SK-N-SH (cell line): ENCODE measurements at regions of chr3 and their contacts with region 1.

Region 1: DNA sequence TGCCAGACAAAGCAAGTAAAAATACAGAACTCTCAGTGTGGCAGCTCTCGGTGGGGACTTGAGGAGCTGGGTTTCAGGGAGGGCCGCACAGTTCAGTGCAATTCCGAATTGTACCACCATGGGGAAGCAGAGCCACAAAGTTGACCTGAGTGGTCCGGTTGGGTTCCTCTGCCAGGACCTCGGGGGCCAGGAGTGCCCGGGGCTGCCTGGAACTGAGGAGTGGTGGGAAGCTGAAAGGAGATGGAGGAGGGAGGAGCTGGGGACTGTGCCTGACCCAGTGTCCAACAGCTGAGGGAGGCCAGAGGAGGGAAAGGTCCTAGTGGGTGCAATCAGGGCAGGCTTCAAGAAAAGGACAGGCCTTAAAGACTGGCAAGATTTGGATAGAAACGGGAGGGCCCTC is 32.2 kb upstream of the TRH start:
- DNase-seq: peak; percentile 86
- H3K4me3 ChIP-seq: peak overlapping the region in 1 of 2 experiments; percentile 30; a peak in 1 of 4 replicates
- H3K27ac ChIP-seq: no peak overlapping the region
- H3K4me1 ChIP-seq: no peaks in the 10 kb centered on the region
- H3K27me3 ChIP-seq: no peaks in the 10 kb centered on the region; the same call in 1 of the 2 replicates
- CTCF ChIP-seq: peak; percentile 73
- EP300 ChIP-seq: no peak
- RAD21 ChIP-seq: peak; percentile 92

Region 2: GRCh38 chr3:129490242-129491045 is 451.9 kb before region 1 on chr3:
- CTCF ChIA-PET with region 1: interaction called, 11 read pairs
- POLR2A ChIA-PET with region 1: no interaction called
- DNase-seq: peak; percentile 84
- H3K4me3 ChIP-seq: no peak overlapping the region
- H3K27ac ChIP-seq: peak overlapping the region in 1 of 2 experiments; percentile 41; a peak in 1 of 4 replicates
- H3K4me1 ChIP-seq: peaks cover 0 to 9% of the 10 kb centered on the region in 2 experiments; a peak in 1 of 4 replicates
- H3K27me3 ChIP-seq: no peaks in the 10 kb centered on the region
- CTCF ChIP-seq: peak; percentile 92
- EP300 ChIP-seq: no peak
- RAD21 ChIP-seq: peak; percentile 98

Region 3: DNA sequence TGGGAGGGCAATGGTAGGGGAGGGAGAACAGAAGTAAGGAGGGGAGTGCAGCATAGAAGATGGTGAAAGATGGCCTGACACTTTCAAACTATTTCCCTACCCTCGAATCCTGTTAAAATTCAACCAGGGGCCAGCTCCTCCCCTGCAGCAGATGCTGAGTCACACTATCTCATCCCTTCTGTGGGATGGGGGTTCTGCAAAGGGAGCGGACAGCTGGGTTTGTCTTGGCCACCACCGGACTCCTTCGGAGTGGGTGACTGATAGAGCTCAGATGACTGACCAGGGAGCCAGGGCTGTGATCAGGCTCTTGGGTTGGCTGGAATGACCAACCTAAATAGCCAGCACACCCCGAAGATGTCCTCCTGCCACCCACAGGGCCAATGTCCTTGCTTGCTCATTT is 15.2 kb before region 1 on chr3:
- CTCF ChIA-PET with region 1: interaction called, 11 read pairs
- POLR2A ChIA-PET with region 1: no interaction called
- DNase-seq: no peak
- H3K4me3 ChIP-seq: no peak overlapping the region
- H3K27ac ChIP-seq: no peak overlapping the region
- H3K4me1 ChIP-seq: no peaks in the 10 kb centered on the region
- H3K27me3 ChIP-seq: no peaks in the 10 kb centered on the region
- CTCF ChIP-seq: no peak
- EP300 ChIP-seq: no peak
- RAD21 ChIP-seq: no peak

Region 4: GRCh38 chr3:129966876-129967275 is 24.6 kb after region 1 on chr3:
- CTCF ChIA-PET with region 1: interaction called, 13 read pairs
- POLR2A ChIA-PET with region 1: no interaction called
- DNase-seq: no peak
- H3K4me3 ChIP-seq: no peak overlapping the region
- H3K27ac ChIP-seq: no peak overlapping the region
- H3K4me1 ChIP-seq: no peaks in the 10 kb centered on the region
- H3K27me3 ChIP-seq: no peaks in the 10 kb centered on the region; the same call in 1 of the 2 replicates
- CTCF ChIP-seq: no peak
- EP300 ChIP-seq: no peak
- RAD21 ChIP-seq: no peak

Region 5: GRCh38 chr3:129992781-129993180 is 50.5 kb after region 1 on chr3:
- CTCF ChIA-PET with region 1: interaction called, 58 read pairs
- POLR2A ChIA-PET with region 1: no interaction called
- DNase-seq: peak; percentile 66
- H3K4me3 ChIP-seq: no peak overlapping the region
- H3K27ac ChIP-seq: no peak overlapping the region
- H3K4me1 ChIP-seq: no peaks in the 10 kb centered on the region; a peak in 1 of 4 replicates
- H3K27me3 ChIP-seq: peaks cover 35% of the 10 kb centered on the region; the same call in 1 of the 2 replicates
- CTCF ChIP-seq: peak; percentile 42
- EP300 ChIP-seq: no peak
- RAD21 ChIP-seq: peak; percentile 26

Region 6: GRCh38 chr3:130111185-130111864 is 169.0 kb after region 1 on chr3:
- CTCF ChIA-PET with region 1: interaction called, 146 read pairs
- POLR2A ChIA-PET with region 1: no interaction called
- DNase-seq: peak; percentile 92
- H3K4me3 ChIP-seq: peak overlapping the region; percentile 70 to 71
- H3K27ac ChIP-seq: peak overlapping the region; percentile 50 to 80; a peak in 3 of 4 replicates
- H3K4me1 ChIP-seq: no peaks in the 10 kb centered on the region; a peak in 1 of 4 replicates
- H3K27me3 ChIP-seq: no peaks in the 10 kb centered on the region
- CTCF ChIP-seq: no peak
- EP300 ChIP-seq: no peak
- RAD21 ChIP-seq: no peak